Activated T-helper 1 cell treated with anti-CD3 and anti-CD28 coated beads, Interleukin-12 subunit alpha, Interleukin-12 subunit beta, Interleukin-2, Interleukin-4 antibody, amounts not matched to agents 30 ng/mL and 10 ng/mL and 1 ng/mL, durations not matched to agents 14 hours and 24 hours and 36 hours (primary cell): ENCODE measurements at regions of chr11 and their contacts with region 1.

Region 1: DNA sequence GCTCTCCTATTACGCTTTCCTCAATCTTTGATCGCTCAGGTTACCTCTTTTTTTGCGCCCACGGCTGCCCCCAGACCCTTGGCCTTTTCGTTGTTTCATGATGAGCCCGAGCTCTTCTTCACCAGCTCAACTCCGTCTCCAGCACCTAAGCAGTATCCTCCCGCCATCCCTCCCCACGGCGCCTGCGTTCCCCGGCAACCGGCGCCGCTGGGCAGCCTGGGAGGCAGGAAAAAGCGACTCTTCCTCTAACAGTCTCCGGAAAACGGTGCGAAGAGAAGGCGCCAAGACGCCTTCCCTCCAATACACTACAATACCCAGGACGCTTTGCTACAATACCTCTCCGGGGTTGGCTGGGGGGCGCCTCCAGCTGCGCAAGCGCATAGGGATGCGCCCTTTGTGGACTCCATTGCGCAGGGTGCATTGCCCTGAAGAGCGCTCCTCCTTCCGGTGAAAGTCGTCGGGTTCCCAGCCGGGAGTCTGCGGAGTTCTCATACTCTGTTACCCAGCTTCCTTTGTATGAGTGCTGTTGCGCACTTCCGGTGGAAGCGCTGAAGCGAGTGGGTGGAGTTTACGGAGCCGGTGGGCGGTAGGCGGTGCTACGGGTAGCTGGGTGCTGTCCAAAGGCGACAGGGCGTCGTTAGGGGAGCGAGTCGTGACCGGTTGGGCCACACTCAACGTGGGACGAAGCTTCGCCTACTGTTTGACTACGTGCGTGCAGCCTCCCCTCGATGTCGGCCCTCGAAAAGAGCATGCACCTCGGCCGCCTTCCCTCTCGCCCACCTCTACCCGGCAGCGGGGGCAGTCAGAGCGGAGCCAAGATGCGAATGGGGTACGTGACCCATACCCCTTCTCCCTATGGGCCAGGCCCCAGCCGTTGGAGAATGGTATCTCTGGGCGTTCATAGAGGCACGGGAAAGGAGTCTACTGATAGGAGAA is at the starts of genes C2CD3 and PPME1:
- DNase-seq: peak; percentile 99
- H3K4me3 Mint-ChIP-seq: no peak within 1 kb of the TSS
- H3K27ac Mint-ChIP-seq: no peak within 1 kb of the TSS
- H3K4me1 Mint-ChIP-seq: peaks cover 11% of the 10 kb centered on the region
- H3K27me3 Mint-ChIP-seq: no peaks in the 10 kb centered on the region
- total RNA-seq, gene C2CD3: 46.5 and 49.5 TPM in 2 replicates
- total RNA-seq, gene PPME1: 64.8 and 68.1 TPM in 2 replicates

Region 2: DNA sequence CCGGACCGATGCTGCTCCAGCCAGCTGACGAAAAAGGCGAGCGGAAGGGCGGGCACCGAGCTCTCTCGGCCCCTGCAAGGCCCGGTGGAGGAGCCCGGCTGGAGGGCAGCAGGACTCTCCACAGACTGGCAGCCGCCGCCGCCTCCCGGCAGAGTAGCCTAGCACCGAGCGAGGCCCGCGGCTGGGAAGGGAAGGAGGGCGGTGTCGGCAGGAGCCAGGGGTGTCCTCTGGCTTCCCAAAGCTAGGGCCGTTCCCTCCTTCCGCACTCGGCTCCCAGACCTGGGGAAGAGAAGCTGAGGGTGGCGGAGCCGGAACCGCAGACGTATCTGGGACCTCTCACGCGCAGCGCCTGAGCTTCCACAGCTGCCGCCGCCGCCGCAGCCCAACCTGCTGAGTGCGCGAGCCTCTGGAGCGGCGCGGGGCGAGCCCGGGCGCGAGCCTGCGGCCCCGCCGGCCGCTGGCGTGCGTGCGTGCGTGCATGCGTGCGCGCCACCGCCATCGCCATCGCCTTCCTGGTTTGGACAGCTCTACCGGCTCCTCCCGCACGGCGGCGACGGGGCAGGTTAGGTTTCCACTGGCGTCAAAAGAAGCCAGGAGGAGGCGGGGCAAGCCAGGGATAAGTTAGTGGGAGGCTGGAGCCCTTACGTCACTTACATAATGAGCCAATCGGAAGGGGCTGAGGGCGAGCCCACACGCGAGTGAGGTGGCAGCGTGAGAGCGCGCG is 410.1 kb before region 1 on chr11 and contains the start of gene RAB6A:
- intact Hi-C with region 1: loop called (anchors 1 kb)
- DNase-seq: peak; percentile 100
- H3K4me3 Mint-ChIP-seq: peak within 1 kb of the TSS; percentile 98
- H3K27ac Mint-ChIP-seq: peak within 1 kb of the TSS; percentile 97
- H3K4me1 Mint-ChIP-seq: peaks cover 41% of the 10 kb centered on the region
- H3K27me3 Mint-ChIP-seq: peaks cover 3% of the 10 kb centered on the region
- total RNA-seq, gene RAB6A: 81.9 and 88.0 TPM in 2 replicates

Region 3: DNA sequence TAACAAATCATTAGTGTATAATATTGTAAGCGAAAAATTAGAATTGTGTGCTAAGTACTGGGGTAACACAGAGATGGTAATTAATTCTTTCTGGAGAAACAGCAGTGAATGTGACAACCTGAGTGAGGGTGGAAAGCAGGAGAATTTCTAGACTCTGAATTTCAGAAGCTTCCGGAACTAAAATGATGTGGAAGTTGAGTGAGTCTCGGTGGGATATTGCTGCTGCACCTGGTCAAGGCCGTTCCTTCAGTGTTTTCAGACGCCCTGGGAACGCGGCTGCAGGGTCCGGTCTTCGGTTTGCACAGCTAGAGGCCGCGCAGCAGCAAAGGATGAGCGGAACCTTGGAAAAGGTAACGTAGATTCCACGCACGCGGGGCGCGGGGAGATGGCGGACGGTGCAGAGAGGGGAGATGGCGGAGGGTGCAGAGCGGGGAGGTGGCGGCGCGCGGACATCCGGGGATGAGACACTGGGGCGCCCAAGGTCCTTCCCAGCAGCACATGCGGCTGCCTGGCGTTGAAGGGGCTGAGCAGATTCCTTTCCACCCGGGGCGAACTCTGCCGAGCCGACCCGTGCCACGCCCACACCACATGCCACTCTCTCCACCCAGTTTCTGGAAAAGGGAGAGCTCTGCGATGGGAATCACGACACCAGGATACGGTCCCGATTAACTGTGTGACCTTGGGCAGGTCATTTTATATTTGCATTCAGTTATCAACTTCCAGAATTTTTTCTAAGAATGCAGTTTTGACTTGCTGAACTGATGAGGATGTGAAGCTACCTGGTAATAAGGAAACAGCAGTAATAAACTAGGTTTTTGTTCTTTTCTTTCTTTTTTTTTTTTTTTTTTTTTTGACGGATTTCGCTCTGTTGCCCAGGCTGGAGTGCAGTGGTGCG is 383.1 kb before region 1 on chr11 and contains the start of gene MRPL48:
- intact Hi-C with region 1: loop called (anchors 1 kb)
- DNase-seq: peak; percentile 84
- H3K4me3 Mint-ChIP-seq: peak within 1 kb of the TSS; percentile 98
- H3K27ac Mint-ChIP-seq: peak within 1 kb of the TSS; percentile 94
- H3K4me1 Mint-ChIP-seq: peaks cover 25% of the 10 kb centered on the region
- H3K27me3 Mint-ChIP-seq: no peaks in the 10 kb centered on the region
- total RNA-seq, gene MRPL48: 55.0 and 56.3 TPM in 2 replicates

Region 4: DNA sequence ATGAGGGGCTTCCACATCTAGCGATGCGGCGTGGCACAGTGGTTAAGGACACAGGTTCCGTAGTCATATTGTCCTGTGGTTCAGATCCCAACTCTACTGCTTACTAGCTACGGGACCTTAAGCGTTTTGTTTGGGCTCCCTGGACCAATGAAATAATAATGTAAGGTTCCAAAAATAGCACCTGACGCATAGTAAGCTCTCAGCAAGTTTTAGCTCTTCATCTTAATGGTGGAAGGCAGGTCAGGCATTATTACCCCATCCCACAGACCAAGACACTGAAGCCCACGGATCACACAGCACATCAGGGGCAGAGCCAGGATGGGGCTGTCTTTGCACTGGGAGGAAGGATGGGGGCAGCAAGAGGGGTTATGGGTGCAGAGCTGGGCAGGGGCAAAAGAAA is 207.1 kb before region 1 on chr11:
- intact Hi-C with region 1: loop called (anchors 1 kb)
- DNase-seq: no peak
- H3K4me3 Mint-ChIP-seq: no peak overlapping the region
- H3K27ac Mint-ChIP-seq: peak overlapping the region; percentile 78
- H3K4me1 Mint-ChIP-seq: peaks cover 28% of the 10 kb centered on the region
- H3K27me3 Mint-ChIP-seq: peaks cover 2% of the 10 kb centered on the region

Region 5: GRCh38 chr11:73995247-73995646 is 175.7 kb before region 1 on chr11:
- intact Hi-C with region 1: loop called (anchors 1 kb)
- DNase-seq: no peak
- H3K4me3 Mint-ChIP-seq: peak overlapping the region; percentile 45
- H3K27ac Mint-ChIP-seq: peak overlapping the region; percentile 94
- H3K4me1 Mint-ChIP-seq: peaks cover 59% of the 10 kb centered on the region
- H3K27me3 Mint-ChIP-seq: no peaks in the 10 kb centered on the region

Region 6: DNA sequence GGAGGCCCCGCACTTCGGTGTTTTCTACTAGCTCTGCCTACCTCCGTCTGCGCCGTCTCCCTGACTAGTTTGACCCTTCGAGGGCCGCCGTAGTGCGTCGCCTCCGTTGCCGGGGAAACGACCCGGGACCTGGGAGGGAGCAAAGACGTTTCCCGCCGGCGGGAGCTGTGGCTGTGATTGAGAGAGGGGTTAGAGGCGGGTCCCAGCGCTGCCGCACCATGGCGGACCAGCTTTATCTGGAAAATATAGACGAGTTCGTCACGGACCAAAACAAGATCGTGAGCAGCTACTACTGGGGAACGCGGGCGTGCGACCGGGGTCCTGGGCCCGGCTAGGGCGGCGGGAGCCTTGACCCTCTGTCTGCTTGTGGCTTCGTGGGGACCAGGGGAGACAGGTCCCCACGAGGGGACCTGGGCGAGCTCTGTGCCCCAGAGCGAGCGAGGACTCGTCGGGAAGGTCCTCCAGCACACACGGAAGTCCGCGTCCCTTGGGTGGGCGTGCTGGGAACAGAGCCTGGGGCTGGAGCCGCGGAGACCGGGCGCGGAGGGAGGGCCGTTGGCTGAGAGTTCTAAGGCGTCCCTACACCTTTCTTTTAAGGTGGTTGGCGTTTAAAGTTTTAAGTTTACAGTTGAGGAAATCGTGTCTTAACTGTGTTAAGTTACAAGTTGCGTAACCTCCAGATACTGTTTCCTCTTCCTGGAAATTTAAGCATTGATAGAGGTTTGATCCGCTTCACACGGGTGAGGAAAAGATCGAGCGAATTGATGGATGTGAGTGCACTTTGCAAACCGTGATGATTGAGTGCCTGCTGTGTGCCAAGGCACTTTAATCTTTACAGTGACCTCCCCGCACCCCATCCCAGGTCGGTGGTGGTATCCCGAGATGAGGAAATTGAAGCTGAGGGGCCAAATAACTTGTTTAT is 421.7 kb after region 1 on chr11 and contains the start of gene POLD3:
- intact Hi-C with region 1: loop called (anchors 2 kb)
- DNase-seq: peak; percentile 90
- H3K4me3 Mint-ChIP-seq: peak within 1 kb of the TSS; percentile 100
- H3K27ac Mint-ChIP-seq: peak within 1 kb of the TSS; percentile 98
- H3K4me1 Mint-ChIP-seq: peaks cover 30% of the 10 kb centered on the region
- H3K27me3 Mint-ChIP-seq: peaks cover 3% of the 10 kb centered on the region
- total RNA-seq, gene POLD3: 50.1 and 52.7 TPM in 2 replicates